ENCODE measurements at regions of chr15 and their contacts with region 1.

Region 1: DNA sequence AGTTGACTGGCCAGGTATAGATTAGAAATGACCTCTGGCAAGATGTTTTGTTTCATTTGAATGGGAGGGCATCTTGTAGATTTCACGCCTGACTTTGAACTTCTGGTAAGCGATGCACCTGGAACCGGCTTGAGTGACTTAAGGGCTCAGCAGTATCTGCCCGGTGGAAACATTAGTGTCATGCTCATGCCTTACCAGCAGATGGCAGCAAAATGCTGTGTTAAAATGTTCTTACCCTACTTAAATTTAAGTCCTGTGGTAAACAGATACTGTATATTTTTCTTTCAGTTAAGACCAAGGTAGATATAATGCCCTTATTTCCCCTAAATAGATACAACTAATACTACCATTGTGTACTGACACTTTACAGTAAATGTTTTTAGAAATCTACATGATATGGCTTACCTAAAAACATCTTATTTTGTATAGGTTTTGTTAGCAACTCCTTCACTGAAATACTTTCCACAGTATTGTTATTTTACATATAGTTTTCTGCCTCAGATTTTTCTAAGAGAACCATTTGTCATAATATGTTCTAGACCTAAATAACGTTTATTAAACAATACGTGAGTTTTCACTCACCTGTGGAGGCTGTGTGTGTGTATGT is 25.5 kb downstream of the ASB7 start:
- DNase-seq: peak; percentile 69
- H3K4me3 ChIP-seq: no peak overlapping the region
- H3K27ac ChIP-seq: no peak overlapping the region
- H3K4me1 ChIP-seq: no peaks in the 10 kb centered on the region
- H3K27me3 ChIP-seq: no peaks in the 10 kb centered on the region
- CTCF ChIP-seq: peak; percentile 81

Region 2: DNA sequence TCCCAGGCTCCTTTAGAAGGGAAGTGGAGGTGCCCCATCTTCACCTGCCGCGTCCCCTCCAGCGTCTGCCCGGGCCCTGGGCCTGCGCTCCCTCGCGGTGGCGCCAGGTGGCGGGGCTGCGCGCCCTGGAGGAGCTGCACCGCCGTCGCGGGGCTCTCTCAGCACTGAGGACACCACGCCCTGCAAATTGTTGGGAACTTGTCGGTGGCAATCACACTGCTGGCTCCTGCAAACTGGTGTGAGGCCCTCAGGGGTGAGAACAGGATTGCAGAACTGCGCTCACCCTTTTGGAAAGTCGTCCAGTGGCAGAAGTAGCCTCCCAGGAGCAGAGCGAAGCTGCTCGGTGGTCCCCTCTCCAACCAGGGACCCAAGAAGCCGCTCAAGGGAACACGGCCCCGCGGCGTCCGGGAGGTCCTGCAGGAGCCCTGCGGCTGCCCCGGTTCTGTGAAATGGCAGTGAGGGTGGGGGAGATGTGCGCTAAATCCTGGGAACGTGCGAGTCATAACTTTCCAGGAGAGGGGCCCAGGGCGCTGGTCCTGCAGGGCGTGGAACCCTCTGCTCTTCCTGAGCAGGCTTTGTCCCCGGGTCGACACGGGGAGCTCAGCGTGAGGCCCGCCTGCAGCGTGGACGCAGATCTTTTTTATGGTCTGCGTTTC is 290.3 kb after region 1 on chr15:
- CTCF ChIA-PET with region 1: no interaction called
- POLR2A ChIA-PET with region 1: no interaction called
- intact Hi-C with region 1: loop called (anchors 5 kb)
- DNase-seq: peak; percentile 89
- H3K4me3 ChIP-seq: peak overlapping the region; percentile 51
- H3K27ac ChIP-seq: no peak overlapping the region
- H3K4me1 ChIP-seq: no peaks in the 10 kb centered on the region
- H3K27me3 ChIP-seq: peaks cover 32% of the 10 kb centered on the region
- CTCF ChIP-seq: peak; percentile 92

Measured in A673 (cell line).